ENCODE measurements at regions of chr6 and their contacts with region 1.

Region 1: DNA sequence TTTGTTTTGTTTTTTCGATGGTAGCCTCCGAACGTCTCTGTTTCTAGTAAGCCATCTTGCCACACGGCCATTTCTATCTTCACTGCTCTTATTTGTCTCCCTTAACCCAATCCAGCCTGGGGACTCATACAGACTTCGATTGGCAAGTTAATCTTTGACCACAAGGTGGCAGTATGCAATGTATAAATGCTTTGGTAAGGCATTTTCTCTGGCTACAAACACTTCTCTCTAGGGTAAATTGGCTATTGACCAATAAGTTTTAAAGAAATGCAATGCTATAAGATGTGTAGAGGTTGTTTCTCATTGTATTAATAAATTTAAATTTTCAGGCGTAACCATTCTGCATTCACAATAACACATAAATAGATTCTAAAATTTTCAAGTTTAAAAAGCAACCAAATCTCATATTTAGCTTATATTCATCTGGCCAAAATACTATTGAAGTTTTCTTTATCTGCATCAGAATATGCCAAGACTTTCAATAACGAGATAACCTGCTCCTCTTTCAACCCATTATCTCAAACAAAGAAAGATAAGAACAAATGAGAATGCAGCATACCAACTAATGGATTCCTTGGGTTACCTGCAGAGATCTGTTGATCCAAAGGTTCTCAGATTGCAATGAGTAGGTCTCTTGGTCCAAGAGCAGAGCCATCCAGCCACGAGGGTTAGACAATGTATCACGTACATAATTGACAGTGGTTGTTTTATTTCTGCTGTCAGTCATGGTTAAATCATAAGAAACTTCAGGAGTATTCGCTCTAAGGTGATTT is 231.9 kb downstream of the PKHD1 start:
- DNase-seq: peak; percentile 41
- H3K4me3 ChIP-seq: no peak overlapping the region
- H3K27ac ChIP-seq: no peak overlapping the region
- H3K4me1 ChIP-seq: no peaks in the 10 kb centered on the region
- H3K27me3 ChIP-seq: peaks cover 2% of the 10 kb centered on the region
- CTCF ChIP-seq: peak; percentile 61 to 67

Region 2: GRCh38 chr6:52020945-52021570 is 165.6 kb after region 1 on chr6:
- CTCF ChIA-PET with region 1: no interaction called
- dilution Hi-C with region 1: no loop called
- in situ Hi-C with region 1: no loop called
- intact Hi-C with region 1: loop called (anchors 1 kb)
- DNase-seq: peak; percentile 10
- H3K4me3 ChIP-seq: no peak overlapping the region
- H3K27ac ChIP-seq: no peak overlapping the region
- H3K4me1 ChIP-seq: no peaks in the 10 kb centered on the region
- H3K27me3 ChIP-seq: peaks cover 2% of the 10 kb centered on the region
- CTCF ChIP-seq: peak; percentile 56 to 65

Measured in mammary epithelial cell (primary cell).